A673 (cell line): ENCODE measurements at regions of chrX and their contacts with region 1.

Region 1: DNA sequence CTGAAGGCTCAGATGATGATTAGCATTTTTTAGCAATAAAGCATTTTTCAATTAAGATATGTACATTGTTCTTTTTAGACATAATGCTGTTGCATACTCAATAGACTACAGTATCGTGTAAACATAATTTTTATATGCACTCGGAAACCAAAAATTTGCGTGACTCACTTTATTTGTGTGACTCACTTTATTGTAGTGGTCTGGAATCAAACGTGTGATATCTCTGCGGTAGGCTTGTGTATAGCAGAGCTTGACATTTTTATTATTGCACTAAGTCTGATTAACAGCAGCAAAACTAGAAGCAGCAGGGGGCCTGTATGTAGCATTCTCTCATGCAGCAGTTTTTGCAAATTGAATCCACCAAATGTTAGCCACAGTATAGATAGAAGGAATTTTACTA is 119.1 kb upstream of the PRDX4 start:
- DNase-seq: peak; percentile 68
- H3K4me3 ChIP-seq: no peak overlapping the region
- H3K27ac ChIP-seq: no peak overlapping the region
- H3K4me1 ChIP-seq: no peaks in the 10 kb centered on the region
- H3K27me3 ChIP-seq: no peaks in the 10 kb centered on the region
- CTCF ChIP-seq: no peak

Region 2: GRCh38 chrX:23168291-23168690 is 379.9 kb before region 1 on chrX:
- CTCF ChIA-PET with region 1: no interaction called
- POLR2A ChIA-PET with region 1: no interaction called
- intact Hi-C with region 1: no loop called
- DNase-seq: no peak
- H3K4me3 ChIP-seq: no peak overlapping the region
- H3K27ac ChIP-seq: no peak overlapping the region
- H3K4me1 ChIP-seq: no peaks in the 10 kb centered on the region
- H3K27me3 ChIP-seq: no peaks in the 10 kb centered on the region
- CTCF ChIP-seq: no peak

Region 3: DNA sequence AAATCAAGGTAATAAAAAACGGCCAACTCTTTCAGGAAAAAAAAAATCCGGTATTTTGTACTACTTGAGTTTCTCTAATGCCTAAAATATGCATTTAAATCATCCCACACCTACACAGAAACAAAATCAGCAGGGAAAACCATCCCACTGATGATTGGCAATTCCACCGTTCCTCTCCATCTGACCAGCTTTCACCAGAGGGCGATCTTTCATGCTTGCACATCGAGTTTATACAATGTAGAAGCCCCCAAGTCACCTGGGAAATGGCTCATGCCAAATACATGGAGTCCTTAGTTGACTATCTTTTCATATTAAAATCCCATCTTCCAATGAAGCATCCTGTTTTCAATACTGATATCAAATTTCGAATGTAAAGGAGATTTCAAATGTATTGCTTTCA is 144.3 kb before region 1 on chrX:
- CTCF ChIA-PET with region 1: no interaction called
- POLR2A ChIA-PET with region 1: no interaction called
- intact Hi-C with region 1: loop called (anchors 5 kb)
- DNase-seq: peak; percentile 23
- H3K4me3 ChIP-seq: no peak overlapping the region
- H3K27ac ChIP-seq: no peak overlapping the region
- H3K4me1 ChIP-seq: no peaks in the 10 kb centered on the region
- H3K27me3 ChIP-seq: no peaks in the 10 kb centered on the region
- CTCF ChIP-seq: peak; percentile 52